MCF 10A (cell line): ENCODE measurements at regions of chr1 and their contacts with region 1.

Region 1: GRCh38 chr1:160251687-160252526 is 10.4 kb downstream of the DCAF8 start:
- DNase-seq: peak; percentile 87
- H3K4me3 Mint-ChIP-seq: no peak overlapping the region
- H3K27ac Mint-ChIP-seq: peak overlapping the region; percentile 75
- H3K4me1 Mint-ChIP-seq: peaks cover 25% of the 10 kb centered on the region
- H3K27me3 Mint-ChIP-seq: no peaks in the 10 kb centered on the region
- CTCF ChIP-seq: peak; percentile 85

Region 2: DNA sequence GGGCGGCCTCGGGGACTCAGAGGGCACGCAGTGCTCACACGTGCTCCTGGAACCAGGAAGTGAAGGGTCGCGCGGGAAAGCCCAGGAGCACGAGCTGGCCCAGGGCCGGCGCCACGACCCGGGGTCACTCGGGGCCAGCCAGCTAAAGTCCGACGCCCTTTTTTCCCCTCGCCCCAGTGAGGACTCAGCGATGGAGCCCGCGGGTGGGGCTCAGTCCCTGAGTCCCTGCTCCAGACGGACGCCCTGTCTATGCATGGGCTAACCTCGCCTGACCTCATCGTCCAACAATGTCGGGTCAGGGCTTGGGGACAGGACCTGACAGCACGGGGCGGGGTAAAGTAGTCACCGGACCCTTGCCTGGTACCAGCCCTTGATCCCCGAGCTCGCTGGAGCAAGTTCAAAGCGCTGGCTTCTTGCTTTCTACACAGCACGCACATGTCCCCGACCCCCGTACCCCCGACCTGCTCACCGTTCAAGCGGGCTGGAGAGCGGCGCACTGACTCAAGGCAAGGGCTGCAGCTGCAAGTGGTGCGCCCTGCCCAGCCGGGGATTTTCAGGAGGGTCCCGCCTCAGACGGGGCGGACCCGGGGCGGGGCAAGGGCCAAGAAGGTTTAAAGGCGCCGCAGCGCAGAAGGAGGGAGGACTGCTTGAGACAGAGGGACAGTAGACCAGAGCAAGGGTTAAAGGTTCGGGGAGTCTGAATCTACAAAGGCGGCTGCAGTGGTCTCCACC is 326.8 kb before region 1 on chr1 and contains the start of gene TAGLN2:
- CTCF ChIA-PET with region 1: no interaction called
- POLR2A ChIA-PET with region 1: interaction called, 5 read pairs
- intact Hi-C with region 1: loop called (anchors 5 kb)
- DNase-seq: peak; percentile 97
- H3K4me3 Mint-ChIP-seq: peak within 1 kb of the TSS; percentile 81
- H3K27ac Mint-ChIP-seq: peak within 1 kb of the TSS; percentile 99
- H3K4me1 Mint-ChIP-seq: peaks cover 44% of the 10 kb centered on the region
- H3K27me3 Mint-ChIP-seq: no peaks in the 10 kb centered on the region
- CTCF ChIP-seq: no peak
- total RNA-seq, gene TAGLN2: 464 and 483 TPM in 2 replicates

Region 3: GRCh38 chr1:160078512-160079195 is 173.3 kb before region 1 on chr1:
- CTCF ChIA-PET with region 1: interaction called, 22 read pairs
- POLR2A ChIA-PET with region 1: no interaction called
- intact Hi-C with region 1: no loop called
- DNase-seq: peak; percentile 67
- H3K4me3 Mint-ChIP-seq: no peak overlapping the region
- H3K27ac Mint-ChIP-seq: no peak overlapping the region
- H3K4me1 Mint-ChIP-seq: no peaks in the 10 kb centered on the region
- H3K27me3 Mint-ChIP-seq: peaks cover 64% of the 10 kb centered on the region
- CTCF ChIP-seq: peak; percentile 98

Region 4: DNA sequence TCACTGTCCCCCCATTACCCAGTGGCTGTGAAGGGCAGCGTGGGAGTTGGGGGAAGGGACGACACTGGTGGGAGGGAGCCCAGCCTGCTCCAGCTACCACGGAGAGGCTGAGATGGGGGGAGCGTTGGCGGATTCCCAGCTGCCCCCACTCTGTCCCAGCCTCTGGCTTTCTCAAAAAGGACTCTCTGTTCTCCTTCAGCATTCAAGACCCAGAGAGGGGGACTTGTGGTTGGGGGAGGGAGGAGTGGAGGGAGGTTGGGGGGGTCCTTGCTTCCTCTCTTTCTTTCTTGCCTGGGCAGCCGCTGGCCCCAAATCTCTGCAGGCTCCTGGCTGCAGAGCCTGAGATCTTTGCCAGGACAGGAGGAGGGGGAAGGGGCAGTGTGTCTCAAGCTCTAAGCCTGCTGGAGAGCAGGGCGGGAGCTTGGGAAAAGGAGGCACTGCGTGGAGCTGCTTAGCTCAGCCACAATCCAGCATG is 134.2 kb before region 1 on chr1:
- CTCF ChIA-PET with region 1: interaction called, 12 read pairs
- POLR2A ChIA-PET with region 1: no interaction called
- intact Hi-C with region 1: no loop called
- DNase-seq: peak; percentile 30
- H3K4me3 Mint-ChIP-seq: no peak overlapping the region
- H3K27ac Mint-ChIP-seq: no peak overlapping the region
- H3K4me1 Mint-ChIP-seq: peaks cover 8% of the 10 kb centered on the region
- H3K27me3 Mint-ChIP-seq: no peaks in the 10 kb centered on the region
- CTCF ChIP-seq: no peak

Region 5: DNA sequence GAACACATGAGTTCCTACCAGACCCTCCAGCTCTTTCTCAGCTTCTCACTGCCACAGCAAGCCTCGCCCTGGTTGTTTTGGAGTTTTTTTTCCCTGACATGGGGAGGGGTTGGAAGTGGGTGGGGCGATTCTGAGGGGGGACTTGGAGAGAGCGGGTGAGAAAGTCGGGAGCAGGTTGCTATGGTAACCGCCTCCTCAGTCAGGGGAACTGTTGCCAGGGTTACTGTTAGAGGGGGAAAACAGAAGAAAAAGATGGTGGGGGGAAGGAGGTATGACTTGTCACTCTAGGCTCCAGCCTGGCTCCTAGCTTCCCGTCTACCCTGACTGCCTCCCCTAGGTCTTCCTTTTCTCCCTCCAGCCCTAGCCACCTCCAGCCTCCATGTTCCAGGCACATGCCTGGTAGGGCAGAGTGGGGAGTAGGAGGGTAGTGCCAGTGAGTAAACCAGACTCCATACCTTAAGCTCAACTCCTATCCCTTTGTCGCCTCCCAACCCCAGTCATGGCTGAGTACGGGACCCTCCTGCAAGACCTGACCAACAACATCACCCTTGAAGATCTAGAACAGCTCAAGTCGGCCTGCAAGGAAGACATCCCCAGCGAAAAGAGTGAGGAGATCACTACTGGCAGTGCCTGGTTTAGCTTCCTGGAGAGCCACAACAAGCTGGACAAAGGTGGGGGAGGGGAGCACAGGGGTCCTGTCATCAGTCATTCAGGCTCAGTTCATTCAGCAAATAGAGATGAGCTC is 40.7 kb before region 1 on chr1:
- CTCF ChIA-PET with region 1: interaction called, 11 read pairs
- POLR2A ChIA-PET with region 1: interaction called, 7 read pairs
- intact Hi-C with region 1: loop called (anchors 5 kb)
- DNase-seq: no peak
- H3K4me3 Mint-ChIP-seq: no peak overlapping the region
- H3K27ac Mint-ChIP-seq: no peak overlapping the region
- H3K4me1 Mint-ChIP-seq: peaks cover 23% of the 10 kb centered on the region
- H3K27me3 Mint-ChIP-seq: no peaks in the 10 kb centered on the region
- CTCF ChIP-seq: no peak

Region 6: GRCh38 chr1:160232911-160233310 is 19.0 kb before region 1 on chr1:
- CTCF ChIA-PET with region 1: interaction called, 104 read pairs
- POLR2A ChIA-PET with region 1: interaction called, 7 read pairs
- intact Hi-C with region 1: no loop called
- DNase-seq: no peak
- H3K4me3 Mint-ChIP-seq: no peak overlapping the region
- H3K27ac Mint-ChIP-seq: peak overlapping the region; percentile 0
- H3K4me1 Mint-ChIP-seq: no peaks in the 10 kb centered on the region
- H3K27me3 Mint-ChIP-seq: no peaks in the 10 kb centered on the region
- CTCF ChIP-seq: no peak

Region 7: DNA sequence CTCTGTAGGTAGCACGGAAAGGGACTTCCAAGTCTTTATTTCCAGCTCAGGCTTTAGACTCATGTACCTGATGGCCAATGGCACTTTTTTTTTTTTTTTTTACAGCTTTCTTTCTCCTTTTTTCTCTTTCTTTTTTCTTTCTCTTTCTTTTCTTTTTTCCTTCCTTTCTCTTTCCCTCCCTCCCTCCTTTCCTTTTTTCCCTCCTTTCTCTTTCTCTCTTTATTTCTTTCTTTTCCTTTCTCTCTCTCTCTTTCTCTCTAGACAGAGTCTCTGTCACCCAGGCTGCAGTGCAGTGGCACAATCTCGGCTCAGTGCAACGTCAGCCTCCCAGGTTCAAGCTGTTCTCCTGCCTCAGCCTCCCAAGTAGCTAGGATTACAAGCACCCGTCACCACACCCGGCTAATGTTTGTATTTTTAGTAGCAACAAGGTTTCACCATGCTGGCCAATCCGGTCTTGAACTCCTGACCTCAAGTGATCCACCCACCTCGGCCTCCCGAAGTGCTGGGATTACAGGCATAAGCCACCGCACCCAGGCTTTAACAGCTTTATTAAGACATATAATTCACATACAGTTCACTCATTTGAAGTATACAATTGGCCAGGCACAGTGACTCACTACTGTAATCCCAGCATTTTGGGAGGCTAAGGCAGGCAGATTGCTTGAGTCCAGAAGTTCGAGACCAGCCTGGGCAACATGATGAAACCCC is 15.5 kb after region 1 on chr1:
- CTCF ChIA-PET with region 1: interaction called, 60 read pairs
- POLR2A ChIA-PET with region 1: interaction called, 60 read pairs
- intact Hi-C with region 1: no loop called
- DNase-seq: no peak
- H3K4me3 Mint-ChIP-seq: no peak overlapping the region
- H3K27ac Mint-ChIP-seq: no peak overlapping the region
- H3K4me1 Mint-ChIP-seq: no peaks in the 10 kb centered on the region
- H3K27me3 Mint-ChIP-seq: peaks cover 16% of the 10 kb centered on the region
- CTCF ChIP-seq: no peak

Region 8: DNA sequence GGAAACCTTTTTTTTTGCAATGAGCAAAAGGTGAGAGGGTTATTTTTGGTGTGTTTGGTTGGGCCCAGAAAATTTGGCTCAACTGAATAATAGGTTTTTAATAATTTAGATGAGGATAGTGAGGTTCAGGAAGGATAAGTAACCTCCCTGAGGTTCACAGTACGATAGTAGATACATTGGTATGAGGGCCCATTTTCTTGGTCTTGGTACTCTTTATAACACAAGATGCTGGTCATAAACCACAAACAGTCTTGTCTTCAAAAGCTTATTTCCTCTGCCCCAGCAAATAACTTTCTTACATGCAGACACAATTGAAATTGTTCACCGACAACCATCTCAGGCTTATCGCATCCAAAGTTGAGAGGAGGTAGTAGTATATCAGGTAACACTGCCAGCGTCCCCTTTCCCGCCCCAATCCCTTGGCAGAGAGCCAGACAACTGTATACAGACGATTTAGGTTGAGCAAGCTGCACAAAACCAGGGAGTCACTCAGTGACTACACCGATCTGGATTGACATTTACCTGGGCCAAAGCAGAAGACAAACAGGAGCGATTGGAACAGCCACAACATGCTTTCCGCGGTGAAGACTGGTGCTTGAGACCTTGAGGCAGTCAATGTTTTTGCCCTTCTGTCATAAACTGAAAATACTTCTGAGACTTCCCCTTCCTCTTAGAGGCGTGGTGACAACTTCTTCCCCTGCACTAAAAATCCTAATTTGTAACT is 270.9 kb after region 1 on chr1 and contains the start of gene SLAMF6:
- CTCF ChIA-PET with region 1: no interaction called
- POLR2A ChIA-PET with region 1: no interaction called
- intact Hi-C with region 1: no loop called
- DNase-seq: no peak
- H3K4me3 Mint-ChIP-seq: no peak within 1 kb of the TSS
- H3K27ac Mint-ChIP-seq: no peak within 1 kb of the TSS
- H3K4me1 Mint-ChIP-seq: peaks cover 28% of the 10 kb centered on the region
- H3K27me3 Mint-ChIP-seq: no peaks in the 10 kb centered on the region
- CTCF ChIP-seq: no peak
- total RNA-seq, gene SLAMF6: not detected in 2 replicates